ENCODE measurements at regions of chr4 and their contacts with region 1.

Region 1: GRCh38 chr4:80913381-80913780 is 117.1 kb upstream of the BMP3 start:
- DNase-seq: no peak
- ATAC-seq: peak; percentile 71
- H3K4me3 Mint-ChIP-seq: no peak overlapping the region
- H3K27ac Mint-ChIP-seq: no peak overlapping the region
- H3K4me1 Mint-ChIP-seq: peaks cover 12% of the 10 kb centered on the region
- H3K27me3 Mint-ChIP-seq: no peaks in the 10 kb centered on the region
- CTCF ChIP-seq: no peak

Region 2: DNA sequence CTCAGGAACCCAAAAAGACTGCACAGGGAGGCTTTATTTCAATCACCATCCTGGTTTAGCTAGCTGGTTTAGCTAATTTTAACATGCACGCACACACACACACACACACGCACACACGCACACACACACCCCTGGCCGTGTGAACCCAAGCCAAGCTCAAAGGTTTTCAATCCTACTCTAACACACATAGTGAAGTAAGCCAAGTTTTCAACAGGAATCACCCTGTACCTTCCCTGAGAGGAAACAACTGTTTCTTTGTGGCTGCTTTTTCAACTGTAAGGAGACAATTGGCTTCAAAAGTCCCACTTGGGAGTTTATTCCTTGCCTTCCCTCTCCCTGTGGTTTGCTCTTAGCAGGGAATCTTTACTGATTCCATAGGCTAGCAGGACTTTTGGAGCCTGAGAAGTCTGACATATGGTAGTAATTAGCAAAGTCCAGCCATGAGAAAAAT is 18.3 kb after region 1 on chr4:
- CTCF ChIA-PET with region 1: no interaction called
- POLR2A ChIA-PET with region 1: no interaction called
- intact Hi-C with region 1: loop called (anchors 2 kb)
- DNase-seq: no peak
- ATAC-seq: no peak
- H3K4me3 Mint-ChIP-seq: no peak overlapping the region
- H3K27ac Mint-ChIP-seq: no peak overlapping the region
- H3K4me1 Mint-ChIP-seq: no peaks in the 10 kb centered on the region
- H3K27me3 Mint-ChIP-seq: no peaks in the 10 kb centered on the region
- CTCF ChIP-seq: no peak

Region 3: DNA sequence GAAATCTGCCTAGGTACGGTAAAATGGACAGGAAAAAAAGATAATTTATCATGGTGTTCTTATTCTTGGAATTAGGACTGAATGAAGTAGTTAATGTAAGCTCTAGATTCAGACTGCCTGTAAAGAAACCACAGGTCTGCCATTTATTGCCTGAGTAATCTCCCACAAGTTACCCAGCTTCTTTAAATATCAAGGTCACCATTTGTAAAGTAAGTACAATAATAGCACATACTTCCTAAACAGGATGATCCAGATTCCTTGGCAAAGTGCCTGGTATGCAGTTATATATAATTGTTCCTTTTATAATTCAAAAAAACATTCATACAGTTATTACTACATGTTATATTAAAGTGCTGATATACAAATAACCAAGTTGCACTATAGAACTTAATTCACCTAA is 1091.8 kb after region 1 on chr4:
- CTCF ChIA-PET with region 1: no interaction called
- POLR2A ChIA-PET with region 1: no interaction called
- intact Hi-C with region 1: no loop called
- DNase-seq: no peak
- ATAC-seq: no peak
- H3K4me3 Mint-ChIP-seq: no peak overlapping the region
- H3K27ac Mint-ChIP-seq: no peak overlapping the region
- H3K4me1 Mint-ChIP-seq: no peaks in the 10 kb centered on the region
- H3K27me3 Mint-ChIP-seq: peaks cover 12% of the 10 kb centered on the region
- CTCF ChIP-seq: no peak

Measured in activated B cell treated with CpG ODN at 0.5 μM for 24 hours (primary cell).